CD8-positive, alpha-beta T cell (primary cell): ENCODE measurements at regions of chr6 and their contacts with region 1.

Region 1: GRCh38 chr6:56902641-56903464 is 52.1 kb upstream of the BEND6 start:
- DNase-seq: peak in 2 of 9 experiments; percentile 44 to 59
- ATAC-seq: no peak
- H3K4me3 ChIP-seq: no peak overlapping the region
- H3K4me3 Mint-ChIP-seq: no peak overlapping the region
- H3K27ac ChIP-seq: no peak overlapping the region
- H3K27ac Mint-ChIP-seq: no peak overlapping the region
- H3K4me1 ChIP-seq: no peaks in the 10 kb centered on the region
- H3K4me1 Mint-ChIP-seq: no peaks in the 10 kb centered on the region
- H3K27me3 ChIP-seq: no peaks in the 10 kb centered on the region
- H3K27me3 Mint-ChIP-seq: peaks cover 7% of the 10 kb centered on the region
- CTCF ChIP-seq: peak; percentile 59

Region 2: GRCh38 chr6:56890683-56891429 is 12.0 kb before region 1 on chr6:
- CTCF ChIA-PET with region 1: interaction called, 22 read pairs
- POLR2A ChIA-PET with region 1: no interaction called
- intact Hi-C with region 1: no loop called
- DNase-seq: no peak
- ATAC-seq: no peak
- H3K4me3 ChIP-seq: no peak overlapping the region
- H3K4me3 Mint-ChIP-seq: no peak overlapping the region
- H3K27ac ChIP-seq: no peak overlapping the region
- H3K27ac Mint-ChIP-seq: no peak overlapping the region
- H3K4me1 ChIP-seq: peaks cover 13% of the 10 kb centered on the region
- H3K4me1 Mint-ChIP-seq: peaks cover 16% of the 10 kb centered on the region
- H3K27me3 ChIP-seq: no peaks in the 10 kb centered on the region
- H3K27me3 Mint-ChIP-seq: no peaks in the 10 kb centered on the region
- CTCF ChIP-seq: no peak

Region 3: GRCh38 chr6:57021086-57021720 is 118.3 kb after region 1 on chr6:
- CTCF ChIA-PET with region 1: interaction called, 7 read pairs
- POLR2A ChIA-PET with region 1: no interaction called
- intact Hi-C with region 1: loop called (anchors 5 kb)
- DNase-seq: peak in 2 of 9 experiments; percentile 22 to 42
- ATAC-seq: peak; percentile 31
- H3K4me3 ChIP-seq: no peak overlapping the region
- H3K4me3 Mint-ChIP-seq: no peak overlapping the region
- H3K27ac ChIP-seq: no peak overlapping the region
- H3K27ac Mint-ChIP-seq: no peak overlapping the region
- H3K4me1 ChIP-seq: no peaks in the 10 kb centered on the region
- H3K4me1 Mint-ChIP-seq: no peaks in the 10 kb centered on the region
- H3K27me3 ChIP-seq: no peaks in the 10 kb centered on the region
- H3K27me3 Mint-ChIP-seq: no peaks in the 10 kb centered on the region
- CTCF ChIP-seq: peak; percentile 69